IMR-90 (cell line): ENCODE measurements at regions of chr1 and their contacts with region 1.

Region 1: GRCh38 chr1:201268604-201269151 is 14.6 kb upstream of the PKP1 start:
- DNase-seq: peak; percentile 84
- ATAC-seq: peak; percentile 59
- H3K4me3 ChIP-seq: no peak overlapping the region
- H3K27ac ChIP-seq: no peak overlapping the region; the same call in 1 of the 2 replicates
- H3K4me1 ChIP-seq: peaks cover 12% of the 10 kb centered on the region
- H3K27me3 ChIP-seq: no peaks in the 10 kb centered on the region; the same call in 1 of the 2 replicates
- CTCF ChIP-seq: no peak
- POLR2A ChIP-seq: no peak
- RAD21 ChIP-seq: no peak

Region 2: DNA sequence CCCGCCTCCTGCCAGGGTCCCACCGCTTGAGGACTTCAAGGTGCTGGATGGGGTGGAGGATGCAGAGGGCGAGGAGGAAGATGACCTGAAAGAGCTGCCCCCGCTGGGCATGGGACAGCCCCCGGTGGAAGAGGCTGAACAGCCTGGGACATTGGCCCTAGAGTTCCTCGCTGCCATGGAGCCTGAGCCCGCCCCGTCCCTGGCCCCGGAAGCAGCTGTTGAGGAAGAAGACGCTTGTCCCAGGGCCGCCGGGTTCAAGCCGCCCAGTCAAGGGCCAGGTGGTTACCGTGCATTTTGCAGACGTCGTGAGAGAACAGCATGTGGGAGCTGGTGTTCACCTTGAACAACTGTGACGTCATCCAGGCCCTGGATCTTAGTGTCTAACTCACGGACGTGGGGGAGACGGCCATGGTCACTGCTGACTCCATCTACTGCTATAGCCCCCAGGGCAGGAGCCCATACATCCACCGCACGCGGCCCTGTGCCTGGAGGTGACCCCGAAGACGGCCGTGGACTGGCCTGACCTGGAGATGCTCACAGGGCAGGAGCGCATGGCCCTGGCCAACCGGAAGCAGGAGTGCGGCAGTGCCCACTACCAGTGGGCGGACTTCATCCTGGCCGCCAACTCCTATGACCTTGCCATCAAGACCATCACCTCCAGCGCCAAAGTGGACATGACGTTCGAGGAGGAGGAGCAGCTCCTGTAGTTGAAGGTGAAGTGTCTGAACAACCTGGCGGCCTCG is 1169.9 kb after region 1 on chr1:
- CTCF ChIA-PET with region 1: no interaction called
- POLR2A ChIA-PET with region 1: no interaction called
- dilution Hi-C with region 1: no loop called
- in situ Hi-C with region 1: no loop called
- intact Hi-C with region 1: loop called (anchors 10 kb)
- DNase-seq: no peak
- ATAC-seq: no peak
- H3K4me3 ChIP-seq: no peak overlapping the region
- H3K27ac ChIP-seq: no peak overlapping the region
- H3K4me1 ChIP-seq: no peaks in the 10 kb centered on the region
- H3K27me3 ChIP-seq: no peaks in the 10 kb centered on the region
- CTCF ChIP-seq: no peak
- POLR2A ChIP-seq: no peak
- RAD21 ChIP-seq: no peak